ENCODE measurements at regions of chr6 and their contacts with region 1.

Region 1: GRCh38 chr6:131894735-131895424 is 56.3 kb downstream of the CCN2 start:
- DNase-seq: no peak
- H3K4me3 ChIP-seq: no peak overlapping the region
- H3K27me3 ChIP-seq: no peaks in the 10 kb centered on the region
- CTCF ChIP-seq: no peak

Region 2: GRCh38 chr6:131063028-131063763 is 831.7 kb before region 1 on chr6 and contains the start of gene EPB41L2:
- CTCF ChIA-PET with region 1: no interaction called
- POLR2A ChIA-PET with region 1: no interaction called
- DNase-seq: peak; percentile 55
- H3K4me3 ChIP-seq: peak within 1 kb of the TSS; percentile 92
- H3K27me3 ChIP-seq: no peaks in the 10 kb centered on the region
- CTCF ChIP-seq: peak; percentile 35; the same call in 1 of the 2 replicates
- polyA plus RNA-seq, gene EPB41L2: 24.5 and 31.2 TPM in 2 replicates

Region 3: DNA sequence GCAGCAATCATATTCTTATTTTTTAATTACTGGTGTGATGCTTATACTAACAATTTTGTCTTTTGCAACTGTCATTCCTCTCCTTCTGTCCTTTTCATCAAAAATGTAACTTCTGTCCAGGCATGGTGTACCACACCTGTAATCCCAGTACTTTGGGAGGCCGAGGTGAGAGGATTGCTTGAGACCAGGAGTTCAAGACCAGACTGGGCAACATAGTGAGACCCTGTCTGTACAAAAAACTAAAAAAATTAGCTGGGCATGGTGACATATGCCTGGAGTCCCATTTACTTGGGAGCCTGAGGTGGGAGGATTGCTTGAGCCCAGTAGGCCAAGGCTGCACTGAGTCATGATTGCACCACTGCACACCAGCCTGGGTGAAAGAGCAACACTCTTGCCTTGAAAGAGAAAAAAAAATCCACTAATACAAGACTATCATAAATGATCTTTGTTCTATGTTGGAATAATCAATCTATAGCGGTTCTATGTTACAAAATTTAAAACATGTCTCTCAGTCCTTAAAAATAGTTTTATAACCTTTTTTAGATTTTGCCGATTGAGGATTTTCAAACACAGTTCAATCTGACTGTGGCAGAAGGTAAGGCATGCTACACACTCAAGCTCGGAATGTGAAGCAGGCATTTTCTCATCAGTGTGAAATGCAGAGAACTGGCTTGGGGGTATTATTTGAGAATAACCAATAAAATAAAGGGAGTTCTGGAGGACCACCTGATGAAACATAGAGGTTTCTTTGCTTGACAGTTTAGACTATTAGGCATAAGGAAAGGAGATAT is 16.7 kb before region 1 on chr6:
- CTCF ChIA-PET with region 1: no interaction called
- POLR2A ChIA-PET with region 1: no interaction called
- DNase-seq: no peak
- H3K4me3 ChIP-seq: no peak overlapping the region
- H3K27me3 ChIP-seq: no peaks in the 10 kb centered on the region
- CTCF ChIP-seq: no peak

Region 4: GRCh38 chr6:131909408-131910218 is 14.7 kb after region 1 on chr6:
- CTCF ChIA-PET with region 1: interaction called, 14 read pairs
- POLR2A ChIA-PET with region 1: no interaction called
- DNase-seq: no peak
- H3K4me3 ChIP-seq: no peak overlapping the region
- H3K27me3 ChIP-seq: no peaks in the 10 kb centered on the region
- CTCF ChIP-seq: peak; percentile 84

Region 5: GRCh38 chr6:132931941-132932514 is 1037.1 kb after region 1 on chr6:
- CTCF ChIA-PET with region 1: no interaction called
- POLR2A ChIA-PET with region 1: no interaction called
- DNase-seq: peak; percentile 26
- H3K4me3 ChIP-seq: no peak overlapping the region
- H3K27me3 ChIP-seq: peaks cover 7% of the 10 kb centered on the region; the same call in 1 of the 2 replicates
- CTCF ChIP-seq: no peak

Measured in BJ (cell line).